RWPE1 (cell line): ENCODE measurements at regions of chr1 and their contacts with region 1.

Region 1: DNA sequence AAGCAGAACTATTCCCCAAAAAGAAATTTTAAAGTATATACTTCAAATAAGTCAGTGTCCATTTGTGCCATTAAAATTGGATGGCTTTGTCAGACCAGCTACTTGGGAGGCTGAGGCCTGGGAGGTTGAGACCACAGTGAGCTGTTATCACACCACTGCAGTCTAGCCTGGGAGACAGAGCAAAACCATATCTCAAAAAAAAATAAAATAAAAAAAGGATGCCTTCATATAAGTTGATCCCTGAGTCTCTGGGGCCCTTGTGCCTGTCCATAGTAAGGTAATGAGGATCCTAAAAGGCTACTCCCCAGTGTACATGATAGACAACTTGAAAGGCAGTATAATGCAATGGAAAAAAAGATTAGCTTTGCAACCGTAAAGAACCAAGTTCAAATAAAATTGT is 81.2 kb upstream of the BARHL2 start:
- DNase-seq: no peak
- H3K27ac ChIP-seq: no peak overlapping the region
- CTCF ChIP-seq: no peak

Region 2: GRCh38 chr1:90476411-90476810 is 321.9 kb before region 1 on chr1:
- CTCF ChIA-PET with region 1: no interaction called
- POLR2A ChIA-PET with region 1: interaction called, 11 read pairs
- DNase-seq: no peak
- H3K27ac ChIP-seq: no peak overlapping the region
- CTCF ChIP-seq: no peak